CD4-positive, alpha-beta memory T cell (primary cell): ENCODE measurements at regions of chr1 and their contacts with region 1.

Region 1: DNA sequence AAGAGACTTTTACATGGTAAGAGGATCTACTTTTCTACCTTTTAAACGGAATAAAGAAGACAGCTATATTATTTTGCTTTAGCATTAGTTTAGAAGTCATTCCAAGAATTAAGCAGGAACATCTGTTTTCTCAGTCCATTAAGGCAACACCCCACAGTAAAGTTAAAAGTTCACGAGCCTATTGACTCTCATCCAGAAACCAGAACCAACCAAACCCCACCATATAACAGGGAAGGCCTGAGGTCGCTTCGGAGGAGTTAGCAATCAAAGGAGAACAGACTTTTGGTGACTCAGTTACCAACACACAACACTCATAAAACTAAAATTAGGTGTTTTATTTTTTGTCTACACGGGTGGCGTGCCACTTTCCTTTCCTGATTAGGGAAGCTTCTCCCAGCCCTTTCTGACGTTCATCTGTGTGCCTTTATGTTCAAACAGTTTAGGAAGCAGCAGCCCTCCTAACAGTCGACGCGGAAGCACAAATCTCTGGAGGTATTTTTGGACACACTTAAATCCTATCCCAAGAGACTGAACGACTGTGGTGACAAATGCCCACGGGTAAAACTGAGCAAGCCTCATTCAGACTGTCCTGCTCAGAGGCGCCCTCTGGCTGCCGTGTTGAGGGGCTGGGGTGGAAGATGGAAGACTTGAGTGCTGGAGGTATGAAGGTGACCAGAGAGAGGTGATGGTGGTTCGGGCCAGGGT is 8.6 kb upstream of the PLA2G2C start:
- DNase-seq: peak; percentile 58 to 72 (median 63)
- H3K4me3 ChIP-seq: no peak overlapping the region
- H3K4me3 Mint-ChIP-seq: no peak overlapping the region
- H3K27ac ChIP-seq: no peak overlapping the region
- H3K27ac Mint-ChIP-seq: peak overlapping the region in 1 of 7 donors; percentile 27
- H3K4me1 ChIP-seq: peaks cover 3% of the 10 kb centered on the region
- H3K4me1 Mint-ChIP-seq: peaks cover 0 to 7% (median 2%) of the 10 kb centered on the region in 4 donors
- H3K27me3 ChIP-seq: no peaks in the 10 kb centered on the region
- H3K27me3 Mint-ChIP-seq: peaks cover 2% of the 10 kb centered on the region in 2 donors

Region 2: DNA sequence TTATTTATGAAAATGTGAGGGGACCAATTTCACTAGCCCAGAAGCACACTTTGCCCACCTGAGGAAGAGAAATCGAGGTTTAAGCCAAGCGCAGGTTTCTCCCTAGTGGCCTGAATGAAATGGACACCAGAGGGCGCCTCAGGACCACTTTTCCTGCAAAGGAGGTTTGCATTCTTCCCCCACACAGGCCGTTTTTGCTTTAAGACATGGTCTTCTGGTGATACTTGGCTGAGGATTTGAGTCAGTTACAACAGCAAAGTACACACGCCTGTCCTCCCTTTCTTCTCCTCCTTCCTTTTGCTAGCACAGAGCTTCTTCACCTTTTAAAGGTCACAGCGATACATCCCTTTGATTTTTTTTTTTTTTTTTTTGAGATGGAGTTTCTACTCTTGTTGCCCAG is 276.9 kb before region 1 on chr1:
- CTCF ChIA-PET with region 1: interaction called, 70 read pairs
- POLR2A ChIA-PET with region 1: interaction called, 3 read pairs
- intact Hi-C with region 1: no loop called
- DNase-seq: peak; percentile 65 to 75 (median 71)
- H3K4me3 ChIP-seq: no peak overlapping the region
- H3K4me3 Mint-ChIP-seq: peak overlapping the region in 1 of 8 donors; percentile 68
- H3K27ac ChIP-seq: no peak overlapping the region
- H3K27ac Mint-ChIP-seq: peak overlapping the region in 1 of 7 donors; percentile 44
- H3K4me1 ChIP-seq: no peaks in the 10 kb centered on the region
- H3K4me1 Mint-ChIP-seq: peaks cover 4 to 6% (median 5%) of the 10 kb centered on the region in 4 donors
- H3K27me3 ChIP-seq: no peaks in the 10 kb centered on the region
- H3K27me3 Mint-ChIP-seq: peaks cover 0 to 1% of the 10 kb centered on the region in 2 donors

Region 3: GRCh38 chr1:20100632-20101355 is 94.1 kb before region 1 on chr1:
- CTCF ChIA-PET with region 1: interaction called, 3 read pairs
- POLR2A ChIA-PET with region 1: no interaction called
- intact Hi-C with region 1: loop called (anchors 1 kb)
- DNase-seq: peak in 4 of 5 donors; percentile 6 to 23 (median 18)
- H3K4me3 ChIP-seq: no peak overlapping the region
- H3K4me3 Mint-ChIP-seq: no peak overlapping the region
- H3K27ac ChIP-seq: no peak overlapping the region
- H3K27ac Mint-ChIP-seq: peak overlapping the region in 2 of 7 donors; percentile 1 to 12
- H3K4me1 ChIP-seq: no peaks in the 10 kb centered on the region
- H3K4me1 Mint-ChIP-seq: no peaks in the 10 kb centered on the region
- H3K27me3 ChIP-seq: no peaks in the 10 kb centered on the region
- H3K27me3 Mint-ChIP-seq: peaks cover 2% of the 10 kb centered on the region in 2 donors

Region 4: GRCh38 chr1:20165522-20165951 is 29.4 kb before region 1 on chr1:
- CTCF ChIA-PET with region 1: interaction called, 19 read pairs
- POLR2A ChIA-PET with region 1: no interaction called
- intact Hi-C with region 1: no loop called
- DNase-seq: no peak
- H3K4me3 ChIP-seq: no peak overlapping the region
- H3K4me3 Mint-ChIP-seq: no peak overlapping the region
- H3K27ac ChIP-seq: no peak overlapping the region
- H3K27ac Mint-ChIP-seq: no peak overlapping the region
- H3K4me1 ChIP-seq: no peaks in the 10 kb centered on the region
- H3K4me1 Mint-ChIP-seq: peaks cover 0 to 1% (median 0%) of the 10 kb centered on the region in 4 donors
- H3K27me3 ChIP-seq: no peaks in the 10 kb centered on the region
- H3K27me3 Mint-ChIP-seq: peaks cover 3 to 5% of the 10 kb centered on the region in 2 donors

Region 5: GRCh38 chr1:20207419-20207959 is 12.6 kb after region 1 on chr1:
- CTCF ChIA-PET with region 1: interaction called, 34 read pairs
- POLR2A ChIA-PET with region 1: no interaction called
- intact Hi-C with region 1: no loop called
- DNase-seq: no peak
- H3K4me3 ChIP-seq: no peak overlapping the region
- H3K4me3 Mint-ChIP-seq: no peak overlapping the region
- H3K27ac ChIP-seq: no peak overlapping the region
- H3K27ac Mint-ChIP-seq: no peak overlapping the region
- H3K4me1 ChIP-seq: peaks cover 3% of the 10 kb centered on the region
- H3K4me1 Mint-ChIP-seq: peaks cover 0 to 2% (median under 1%) of the 10 kb centered on the region in 4 donors
- H3K27me3 ChIP-seq: peaks cover 6% of the 10 kb centered on the region
- H3K27me3 Mint-ChIP-seq: peaks cover 10 to 23% of the 10 kb centered on the region in 2 donors

Region 6: DNA sequence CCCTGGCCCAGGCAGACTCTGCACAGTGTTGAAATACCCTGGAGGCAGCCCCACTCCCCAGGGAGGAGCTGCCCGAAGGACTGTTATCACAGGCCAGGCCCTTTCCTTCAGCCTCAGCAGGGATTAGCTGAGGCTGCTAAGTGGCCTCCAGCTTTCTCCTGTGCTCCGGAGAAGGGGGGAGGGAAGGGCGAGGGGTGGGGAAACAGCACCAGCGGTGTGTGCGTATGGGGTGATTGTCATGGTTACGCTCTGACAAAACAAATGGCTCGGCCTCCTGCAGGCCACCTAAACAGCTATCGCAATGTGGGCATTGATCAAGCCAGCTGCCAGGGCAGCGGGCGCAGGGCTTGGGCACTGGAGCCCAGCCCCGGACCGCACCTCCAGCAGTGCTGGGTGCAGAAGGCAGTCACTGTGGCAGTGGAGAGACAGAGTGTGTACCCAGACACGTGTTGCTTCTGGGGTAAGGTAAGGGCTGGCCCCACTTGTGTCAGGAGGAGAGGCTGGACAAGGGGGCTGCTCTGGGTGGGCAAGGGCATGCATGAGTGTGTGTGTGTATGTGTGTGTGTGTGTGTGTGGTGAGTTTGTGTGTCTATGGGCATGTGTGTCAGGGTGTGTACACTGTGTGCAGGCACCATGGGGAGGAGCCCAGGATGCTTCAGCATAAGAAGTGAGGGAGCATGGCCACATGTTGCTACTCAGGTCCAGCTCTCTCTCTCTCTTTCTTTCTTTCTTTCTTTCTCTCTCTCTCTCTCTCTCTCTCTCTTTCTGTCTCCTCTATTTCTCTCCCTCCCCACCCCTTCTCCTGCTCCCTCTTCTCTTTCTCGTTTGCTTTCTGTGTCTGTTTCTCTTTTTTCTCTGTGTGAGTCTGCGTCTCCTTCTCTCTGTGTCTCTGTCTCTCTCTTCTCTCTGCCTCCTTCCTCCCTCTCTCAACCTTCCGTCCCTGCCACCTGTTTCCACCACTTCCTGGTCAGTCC is 96.0 kb after region 1 on chr1 and contains the start of gene VWA5B1:
- CTCF ChIA-PET with region 1: no interaction called
- POLR2A ChIA-PET with region 1: no interaction called
- intact Hi-C with region 1: no loop called
- DNase-seq: no peak
- H3K4me3 ChIP-seq: no peak within 1 kb of the TSS
- H3K4me3 Mint-ChIP-seq: peak within 1 kb of the TSS; percentile 28 to 64 (median 48)
- H3K27ac ChIP-seq: no peak within 1 kb of the TSS
- H3K27ac Mint-ChIP-seq: peak within 1 kb of the TSS in 2 of 7 donors; percentile 17 to 37
- H3K4me1 ChIP-seq: no peaks in the 10 kb centered on the region
- H3K4me1 Mint-ChIP-seq: peaks cover 9 to 18% (median 13%) of the 10 kb centered on the region in 4 donors
- H3K27me3 ChIP-seq: peaks cover 19% of the 10 kb centered on the region
- H3K27me3 Mint-ChIP-seq: peaks cover 25 to 56% of the 10 kb centered on the region in 2 donors
- total RNA-seq, gene VWA5B1: 0.17 TPM in 1 of 2 experiments, not detected in the other